ENCODE measurements at regions of chr17 and their contacts with region 1.

Region 1: GRCh38 chr17:80876950-80877728 is 114.5 kb upstream of the CHMP6 start:
- DNase-seq: peak; percentile 10 to 50
- H3K4me3 ChIP-seq: no peak overlapping the region
- H3K27ac ChIP-seq: no peak overlapping the region
- H3K4me1 ChIP-seq: no peaks in the 10 kb centered on the region
- H3K27me3 ChIP-seq: no peaks in the 10 kb centered on the region
- CTCF ChIP-seq: no peak

Region 2: DNA sequence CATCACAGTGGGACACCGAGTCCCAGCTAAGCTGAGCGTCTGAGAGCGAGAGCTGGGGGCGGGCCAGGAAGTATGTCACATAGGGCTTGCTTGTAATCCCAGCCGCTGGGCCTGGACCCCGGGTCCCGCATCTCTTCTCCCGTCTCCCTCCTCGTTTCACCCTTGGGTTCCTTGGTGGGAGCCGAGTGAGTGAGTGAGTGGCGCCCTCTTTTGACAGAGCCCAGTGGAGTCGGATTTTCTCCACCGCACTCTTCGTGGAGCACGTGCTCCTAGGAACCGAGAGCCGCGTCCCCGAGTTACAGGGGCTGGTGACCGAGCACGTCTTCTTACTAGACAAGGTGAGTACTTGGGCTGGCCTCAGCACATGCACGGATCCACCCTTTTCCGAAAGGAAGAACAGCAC is 512.9 kb before region 1 on chr17:
- intact Hi-C with region 1: no loop called
- DNase-seq: peak in 1 of 2 donors; percentile 23
- H3K4me3 ChIP-seq: no peak overlapping the region
- H3K27ac ChIP-seq: no peak overlapping the region
- H3K4me1 ChIP-seq: peaks cover 0 to 5% (median 0%) of the 10 kb centered on the region in 4 donors
- H3K27me3 ChIP-seq: no peaks in the 10 kb centered on the region
- CTCF ChIP-seq: peak in 1 of 2 experiments; percentile 24

Region 3: GRCh38 chr17:80439499-80439898 is 437.6 kb before region 1 on chr17:
- intact Hi-C with region 1: loop called (anchors 5 kb)
- DNase-seq: no peak
- H3K4me3 ChIP-seq: no peak overlapping the region
- H3K27ac ChIP-seq: no peak overlapping the region
- H3K4me1 ChIP-seq: no peaks in the 10 kb centered on the region
- H3K27me3 ChIP-seq: peaks cover 0 to 8% of the 10 kb centered on the region in 2 donors
- CTCF ChIP-seq: no peak

Measured in tibial artery (tissue), 4 donors.